ENCODE measurements at regions of chr19 and their contacts with region 1.

Region 1: GRCh38 chr19:19170053-19170872 is at the start of gene MEF2B:
- DNase-seq: no peak
- ATAC-seq: peak; percentile 95
- H3K4me3 ChIP-seq: peak within 1 kb of the TSS; percentile 89
- H3K27ac ChIP-seq: 0 out of 2 replicates have a peak within 1 kb of the TSS, but pooled peaks have one; percentile 27
- H3K4me1 ChIP-seq: peaks cover 30% of the 10 kb centered on the region
- H3K27me3 ChIP-seq: no peaks in the 10 kb centered on the region
- CTCF ChIP-seq: no peak
- EP300 ChIP-seq: no peak
- POLR2A ChIP-seq: peak; percentile 93
- RAD21 ChIP-seq: no peak
- polyA plus RNA-seq, gene MEF2B: 0.09 to 0.21 TPM

Region 2: GRCh38 chr19:19063183-19064097 is 106.8 kb before region 1 on chr19 and contains the start of gene SLC25A42:
- CTCF ChIA-PET with region 1: interaction called, 10 read pairs
- POLR2A ChIA-PET with region 1: interaction called, 6 read pairs
- RAD21 ChIA-PET with region 1: interaction called, 6 read pairs
- SMC1A ChIA-PET with region 1: interaction called, 5 read pairs
- in situ Hi-C with region 1: no loop called
- intact Hi-C with region 1: no loop called
- DNase-seq: peak; percentile 99
- ATAC-seq: peak; percentile 97
- H3K4me3 ChIP-seq: peak within 1 kb of the TSS; percentile 95
- H3K27ac ChIP-seq: peak within 1 kb of the TSS; percentile 89
- H3K4me1 ChIP-seq: peaks cover 17% of the 10 kb centered on the region
- H3K27me3 ChIP-seq: no peaks in the 10 kb centered on the region
- CTCF ChIP-seq: no peak
- EP300 ChIP-seq: no peak
- POLR2A ChIP-seq: peak; percentile 73
- RAD21 ChIP-seq: no peak
- polyA plus RNA-seq, gene SLC25A42: 0.24 to 1.5 TPM

Region 3: DNA sequence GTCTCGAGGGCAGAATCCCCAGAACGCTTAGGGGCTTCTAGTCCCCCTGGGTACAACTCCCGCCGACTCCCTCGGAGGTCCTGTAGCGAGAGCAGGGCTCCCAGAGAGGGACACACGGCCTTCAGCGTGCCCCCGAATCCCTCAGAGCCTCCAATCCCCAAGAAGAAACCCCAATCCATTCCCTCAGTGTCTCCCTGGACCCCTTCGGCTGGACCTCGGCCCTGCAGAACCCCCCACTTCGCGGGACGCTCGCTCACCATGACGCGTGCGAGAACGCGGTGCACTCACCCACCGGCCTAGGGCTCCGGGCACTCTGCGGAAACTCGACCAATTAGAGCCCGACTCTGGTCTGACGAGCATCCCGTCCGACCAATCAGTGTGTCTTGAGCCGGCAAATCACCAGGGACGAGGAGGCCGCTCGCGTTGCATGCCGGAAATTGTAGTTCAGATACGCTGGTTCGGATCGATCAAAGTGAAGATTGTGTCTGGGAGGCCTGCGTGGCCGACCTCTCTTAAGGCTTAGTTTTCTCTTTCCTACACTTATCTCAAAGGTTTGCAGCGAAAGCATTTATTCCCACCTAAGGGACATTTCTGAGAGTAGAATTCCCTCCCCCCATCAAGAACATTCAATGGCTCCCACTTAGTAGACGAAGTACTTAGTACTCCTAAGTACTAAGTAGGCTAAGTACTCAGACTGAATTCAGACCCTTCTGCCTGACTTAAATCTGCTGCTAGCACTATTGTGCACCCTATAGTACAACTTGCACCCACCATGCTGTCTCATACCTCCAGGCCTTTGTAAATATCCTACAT is 31.9 kb before region 1 on chr19 and contains the start of gene TMEM161A:
- CTCF ChIA-PET with region 1: interaction called, 76 read pairs
- POLR2A ChIA-PET with region 1: no interaction called
- RAD21 ChIA-PET with region 1: interaction called, 39 read pairs
- SMC1A ChIA-PET with region 1: interaction called, 24 read pairs
- in situ Hi-C with region 1: loop called (anchors 5 kb)
- intact Hi-C with region 1: no loop called
- DNase-seq: peak; percentile 98
- ATAC-seq: peak; percentile 100
- H3K4me3 ChIP-seq: peak within 1 kb of the TSS; percentile 77
- H3K27ac ChIP-seq: peak within 1 kb of the TSS; percentile 76
- H3K4me1 ChIP-seq: peaks cover 6% of the 10 kb centered on the region; the same call in 1 of the 2 replicates
- H3K27me3 ChIP-seq: no peaks in the 10 kb centered on the region
- CTCF ChIP-seq: no peak
- EP300 ChIP-seq: no peak
- POLR2A ChIP-seq: peak; percentile 90
- RAD21 ChIP-seq: no peak
- polyA plus RNA-seq, gene TMEM161A: 1.1 to 2.0 TPM

Region 4: DNA sequence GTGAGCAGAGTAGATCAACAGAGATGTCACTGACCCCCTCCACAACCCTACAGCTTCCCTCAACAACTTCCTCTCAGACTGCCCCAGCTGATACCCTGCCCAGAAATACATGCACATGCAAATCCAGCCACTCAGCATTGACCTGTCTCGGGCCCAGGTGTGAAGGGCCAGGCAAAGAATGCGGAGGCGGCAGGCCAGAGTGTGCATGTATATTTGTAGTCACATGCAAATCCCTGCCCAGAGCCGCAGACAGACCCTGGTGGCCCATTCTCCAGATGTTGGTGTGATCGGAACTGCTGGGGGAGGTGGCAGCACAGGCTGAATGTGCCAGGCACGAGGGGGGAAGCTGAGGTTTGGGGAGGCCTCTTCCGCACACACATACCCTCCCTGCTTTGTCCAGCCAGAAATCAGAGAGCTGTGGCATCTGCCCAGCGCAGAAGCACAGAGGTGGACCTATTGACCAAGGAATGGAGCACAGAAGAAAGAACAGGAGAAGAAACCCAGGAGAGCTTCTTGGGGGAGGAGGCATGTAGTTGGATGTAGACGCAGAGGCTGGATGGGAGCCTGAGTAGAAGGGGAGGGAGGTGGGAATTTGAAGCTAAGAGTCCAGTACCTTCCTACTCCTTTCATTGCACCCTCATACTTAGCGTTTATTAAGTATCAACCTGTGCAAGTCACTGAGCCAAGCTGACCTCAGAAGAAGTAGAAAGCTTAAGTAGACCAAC is 14.6 kb before region 1 on chr19:
- CTCF ChIA-PET with region 1: interaction called, 207 read pairs
- POLR2A ChIA-PET with region 1: interaction called, 74 read pairs
- RAD21 ChIA-PET with region 1: interaction called, 394 read pairs
- SMC1A ChIA-PET with region 1: interaction called, 83 read pairs
- in situ Hi-C with region 1: no loop called
- intact Hi-C with region 1: no loop called
- DNase-seq: peak; percentile 84
- ATAC-seq: peak; percentile 69
- H3K4me3 ChIP-seq: peak overlapping the region; percentile 32; the same call in 1 of the 2 replicates
- H3K27ac ChIP-seq: peak overlapping the region; percentile 63
- H3K4me1 ChIP-seq: peaks cover 64% of the 10 kb centered on the region
- H3K27me3 ChIP-seq: no peaks in the 10 kb centered on the region
- CTCF ChIP-seq: no peak
- EP300 ChIP-seq: 0 out of 4 replicates have a peak, but pooled peaks of 1 of the 2 experiments have one; percentile 16
- POLR2A ChIP-seq: peak; percentile 62
- RAD21 ChIP-seq: no peak

Region 5: GRCh38 chr19:19192078-19192882 is 22.0 kb after region 1 on chr19 and contains the starts of genes BORCS8 and RFXANK:
- CTCF ChIA-PET with region 1: interaction called, 13 read pairs
- POLR2A ChIA-PET with region 1: interaction called, 8 read pairs
- RAD21 ChIA-PET with region 1: interaction called, 5 read pairs
- SMC1A ChIA-PET with region 1: interaction called, 6 read pairs
- in situ Hi-C with region 1: no loop called
- intact Hi-C with region 1: no loop called
- DNase-seq: peak; percentile 97
- ATAC-seq: peak; percentile 94
- H3K4me3 ChIP-seq: peak within 1 kb of the TSS; percentile 85
- H3K27ac ChIP-seq: peak within 1 kb of the TSS; percentile 97
- H3K4me1 ChIP-seq: peaks cover 11% of the 10 kb centered on the region
- H3K27me3 ChIP-seq: no peaks in the 10 kb centered on the region
- CTCF ChIP-seq: no peak
- EP300 ChIP-seq: no peak
- POLR2A ChIP-seq: peak; percentile 86
- RAD21 ChIP-seq: no peak
- polyA plus RNA-seq, gene BORCS8: 3.7 to 6.0 TPM
- polyA plus RNA-seq, gene RFXANK: 70.8 TPM

Region 6: DNA sequence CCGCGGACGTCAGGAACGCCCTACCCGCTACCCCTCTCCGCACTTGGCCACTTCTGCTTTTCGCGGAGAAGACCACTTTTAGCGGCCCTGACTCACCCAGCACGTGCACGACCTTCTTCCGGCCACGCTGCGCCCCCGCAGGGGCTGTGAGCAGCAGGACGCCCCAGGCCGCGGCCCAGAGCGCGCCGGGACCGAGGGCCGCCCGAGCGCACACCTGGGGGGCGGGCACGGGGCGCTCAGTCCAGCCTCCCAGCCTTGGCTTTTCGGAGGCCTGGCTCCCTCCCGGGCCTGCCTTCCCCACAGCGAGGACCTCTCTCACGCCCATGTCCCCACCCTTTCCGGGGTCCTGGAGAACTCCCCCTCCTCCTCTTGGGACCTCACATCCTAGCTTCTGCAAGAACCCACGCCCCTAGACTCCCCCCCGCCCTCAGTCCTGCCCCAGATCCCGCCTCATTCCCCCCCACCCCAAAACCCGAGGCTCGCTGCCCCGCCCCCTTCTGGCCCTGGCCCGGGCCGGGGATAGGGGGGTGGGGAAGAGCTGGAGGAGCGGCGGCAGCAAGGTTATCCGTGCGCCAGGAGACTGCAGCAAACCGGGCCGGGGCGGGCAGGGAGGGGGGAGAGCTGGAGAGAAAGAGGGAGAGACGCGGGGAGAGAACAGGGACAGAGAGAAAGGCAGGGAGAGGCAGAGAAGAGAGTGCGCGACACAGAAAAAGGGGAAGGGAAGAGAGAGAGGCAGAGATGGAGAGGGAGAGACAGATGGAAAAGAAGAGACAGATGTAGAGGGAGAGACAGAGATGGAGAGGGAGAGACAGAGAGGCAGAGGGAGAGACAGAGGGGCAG is 91.3 kb after region 1 on chr19:
- CTCF ChIA-PET with region 1: no interaction called
- POLR2A ChIA-PET with region 1: no interaction called
- RAD21 ChIA-PET with region 1: no interaction called
- SMC1A ChIA-PET with region 1: no interaction called
- in situ Hi-C with region 1: no loop called
- intact Hi-C with region 1: no loop called
- DNase-seq: no peak
- ATAC-seq: no peak
- H3K4me3 ChIP-seq: no peak overlapping the region
- H3K27ac ChIP-seq: no peak overlapping the region
- H3K4me1 ChIP-seq: no peaks in the 10 kb centered on the region
- H3K27me3 ChIP-seq: peaks cover 0 to 2% of the 10 kb centered on the region in 2 experiments; a peak in 1 of 4 replicates
- CTCF ChIP-seq: no peak
- EP300 ChIP-seq: no peak
- POLR2A ChIP-seq: no peak
- RAD21 ChIP-seq: no peak

Measured in GM12878 (cell line).